H1 (cell line): ENCODE measurements at regions of chr14 and their contacts with region 1.

Region 1: DNA sequence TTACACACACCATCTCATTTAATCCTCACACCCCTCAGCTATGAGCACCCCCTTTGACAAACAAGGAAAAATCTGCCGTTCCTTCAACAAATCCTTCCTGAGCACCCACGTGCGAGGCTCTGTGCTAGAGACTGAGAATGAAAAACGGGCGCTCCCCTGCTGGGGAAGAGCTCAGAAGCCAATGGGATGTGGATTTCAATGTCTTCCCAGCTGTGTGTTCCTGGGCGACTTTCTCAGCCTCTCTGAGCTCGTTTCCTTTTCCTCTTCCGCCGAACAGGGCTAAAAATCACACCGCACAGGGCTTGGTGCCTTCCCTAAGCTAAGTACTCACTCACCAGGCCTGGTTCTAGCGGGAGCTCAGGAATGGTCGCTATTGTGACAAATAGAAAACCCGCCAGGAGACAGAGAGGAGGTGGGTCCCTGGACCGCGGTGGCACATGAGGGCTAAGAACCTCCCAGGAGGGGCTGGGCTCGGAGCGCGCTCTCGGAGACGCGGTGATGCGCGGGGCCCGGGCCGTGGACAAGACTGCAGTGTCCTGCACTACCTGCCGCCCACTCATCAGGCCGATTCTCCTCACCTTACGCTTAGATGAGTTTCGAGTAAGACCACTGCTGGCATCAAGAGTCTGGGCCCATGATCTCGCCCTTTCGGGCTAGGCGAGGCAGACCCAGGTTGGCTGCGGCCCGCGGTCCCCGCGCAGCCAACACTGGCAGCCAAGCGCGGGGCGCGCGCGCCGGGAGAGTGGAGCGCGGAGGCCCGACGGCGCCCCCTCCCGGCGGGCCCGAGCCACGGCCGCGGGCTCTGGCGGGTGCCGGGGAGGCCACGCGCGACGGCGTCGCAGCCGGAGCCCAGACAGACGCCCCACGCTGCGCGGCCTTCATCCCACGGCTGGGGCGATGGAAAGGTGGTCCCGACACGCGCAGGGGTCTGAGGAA is 17.0 kb downstream of the ZDHHC22 start:
- DNase-seq: peak in 1 of 2 experiments; percentile 81
- H3K4me3 ChIP-seq: peak overlapping the region; percentile 62 to 79 (median 68)
- H3K27ac ChIP-seq: no peak overlapping the region
- H3K4me1 ChIP-seq: peaks cover 20 to 36% (median 24%) of the 10 kb centered on the region in 4 experiments
- H3K27me3 ChIP-seq: peaks cover 0 to 2% (median 0%) of the 10 kb centered on the region in 4 experiments; a peak in 1 of 7 replicates
- CTCF ChIP-seq: peak; percentile 66 to 78 (median 68)
- EP300 ChIP-seq: no peak
- POLR2A ChIP-seq: peak in 1 of 2 experiments; percentile 30; a peak in 1 of 3 replicates
- RAD21 ChIP-seq: peak; percentile 33 to 65; a peak in 3 of 4 replicates

Region 2: DNA sequence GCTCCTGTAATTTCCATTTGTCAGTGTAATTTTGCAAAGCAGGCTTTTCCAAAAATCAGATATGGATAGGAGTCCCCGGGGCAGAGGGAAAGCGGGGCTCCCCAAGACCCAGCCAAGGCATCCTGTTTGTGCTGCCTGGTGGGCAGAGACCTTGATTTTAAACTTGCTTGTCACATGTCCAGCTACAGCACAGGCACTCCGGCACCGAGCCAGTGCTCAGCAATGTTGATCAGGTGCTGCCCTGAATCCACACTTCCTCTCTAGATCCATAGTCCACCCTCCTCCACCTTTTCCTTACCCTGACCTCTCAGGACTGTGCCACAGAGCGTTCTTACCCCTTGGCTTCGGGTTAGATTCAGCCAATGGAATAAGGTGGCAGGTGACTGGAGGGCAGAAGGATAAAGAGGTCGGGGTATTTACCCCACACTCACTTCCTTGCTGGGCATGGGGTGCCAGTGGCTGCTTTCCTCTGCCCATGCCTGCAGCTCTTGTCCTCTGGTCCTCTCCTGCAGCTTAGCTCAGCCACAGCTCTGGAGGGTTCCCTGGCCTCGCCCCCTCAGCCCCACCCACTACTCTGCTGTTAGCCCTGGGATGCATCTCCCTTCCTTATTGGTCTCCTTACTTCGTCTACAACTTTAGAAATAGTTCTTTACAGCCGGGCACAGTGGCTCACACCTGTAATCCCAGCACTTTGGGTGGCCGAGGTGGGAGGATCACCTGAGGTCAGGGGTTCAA is 176.2 kb before region 1 on chr14:
- CTCF ChIA-PET with region 1: no interaction called
- POLR2A ChIA-PET with region 1: no interaction called
- DNase-seq: no peak
- H3K4me3 ChIP-seq: peak overlapping the region in 1 of 4 experiments; percentile 45; a peak in 1 of 8 replicates
- H3K27ac ChIP-seq: peak overlapping the region; percentile 23; the same call in 1 of the 2 replicates
- H3K4me1 ChIP-seq: peaks cover 15 to 21% (median 19%) of the 10 kb centered on the region in 4 experiments
- H3K27me3 ChIP-seq: no peaks in the 10 kb centered on the region
- CTCF ChIP-seq: no peak
- EP300 ChIP-seq: no peak
- POLR2A ChIP-seq: no peak
- RAD21 ChIP-seq: no peak

Region 3: DNA sequence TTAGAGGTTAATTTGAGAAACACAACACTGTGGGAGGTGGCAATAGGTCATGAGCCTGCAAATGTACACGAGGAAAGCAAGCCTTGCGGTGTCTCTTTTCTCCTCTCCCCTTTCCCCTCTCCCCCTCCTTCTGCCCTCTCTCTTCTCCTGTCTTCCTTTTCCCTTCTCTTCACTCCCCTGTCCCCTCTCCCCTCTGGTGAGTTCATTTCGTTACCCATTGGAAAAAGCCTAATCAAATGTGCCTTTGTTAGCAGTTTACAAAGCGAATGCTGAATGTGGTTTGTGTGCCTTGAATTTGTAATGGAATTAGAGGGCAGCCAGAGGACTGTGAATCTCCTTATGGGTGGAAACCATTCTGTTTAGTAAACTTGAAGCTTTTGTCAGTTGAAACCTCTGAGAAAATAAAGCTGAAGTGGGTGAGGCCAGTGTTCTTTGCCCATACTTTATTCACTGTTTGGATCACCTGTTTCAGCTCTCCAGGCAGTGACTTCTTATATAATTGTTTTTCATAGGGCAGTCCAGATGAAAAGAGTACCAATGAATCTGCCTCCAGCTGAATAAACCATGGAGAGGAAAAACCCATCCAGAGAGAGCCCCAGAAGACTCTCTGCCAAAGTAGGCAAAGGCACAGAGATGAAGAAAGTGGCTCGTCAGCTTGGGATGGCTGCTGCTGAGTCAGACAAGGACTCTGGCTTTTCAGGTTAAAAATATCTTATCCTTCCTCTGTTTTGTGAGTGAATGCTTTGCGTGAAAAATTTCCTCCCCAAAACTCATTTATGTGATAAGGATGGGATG is 19.3 kb before region 1 on chr14:
- CTCF ChIA-PET with region 1: interaction called, 1,490 read pairs
- POLR2A ChIA-PET with region 1: interaction called, 69 read pairs
- DNase-seq: no peak
- H3K4me3 ChIP-seq: peak overlapping the region in 1 of 4 experiments; percentile 44; a peak in 2 of 8 replicates
- H3K27ac ChIP-seq: peak overlapping the region; percentile 58; the same call in 1 of the 2 replicates
- H3K4me1 ChIP-seq: peaks cover 2 to 25% (median 15%) of the 10 kb centered on the region in 4 experiments
- H3K27me3 ChIP-seq: no peaks in the 10 kb centered on the region
- CTCF ChIP-seq: no peak
- EP300 ChIP-seq: no peak
- POLR2A ChIP-seq: no peak
- RAD21 ChIP-seq: no peak

Region 4: DNA sequence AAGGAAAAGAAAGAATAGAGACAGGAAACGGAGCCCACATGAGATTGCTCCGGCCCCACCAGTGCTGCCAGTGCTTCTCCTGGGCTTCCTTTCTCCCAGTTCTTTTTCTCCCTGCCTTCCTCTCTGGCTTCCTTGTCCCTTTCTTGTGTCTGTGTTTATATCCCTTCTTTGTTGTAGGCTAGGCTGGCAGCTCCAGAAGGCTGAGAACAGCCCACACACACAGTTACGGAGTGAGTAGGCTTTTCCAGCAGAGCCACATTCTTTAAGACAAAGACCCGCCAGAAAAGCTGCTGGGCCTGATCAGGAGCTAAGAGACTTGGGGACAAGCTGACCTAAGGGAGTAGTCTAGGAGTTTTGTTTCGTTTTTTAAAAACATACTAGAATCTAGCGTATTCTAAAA is 13.6 kb before region 1 on chr14:
- CTCF ChIA-PET with region 1: interaction called, 1,490 read pairs
- POLR2A ChIA-PET with region 1: interaction called, 69 read pairs
- DNase-seq: peak in 1 of 2 experiments; percentile 59
- H3K4me3 ChIP-seq: peak overlapping the region in 1 of 4 experiments; percentile 39; a peak in 1 of 8 replicates
- H3K27ac ChIP-seq: peak overlapping the region; percentile 76
- H3K4me1 ChIP-seq: peaks cover 0 to 21% (median 14%) of the 10 kb centered on the region in 4 experiments; a peak in 6 of 7 replicates
- H3K27me3 ChIP-seq: no peaks in the 10 kb centered on the region
- CTCF ChIP-seq: no peak
- EP300 ChIP-seq: peak in 1 of 2 experiments; percentile 33; a peak in 1 of 3 replicates
- POLR2A ChIP-seq: peak in 1 of 2 experiments; percentile 73; a peak in 2 of 3 replicates
- RAD21 ChIP-seq: no peak

Region 5: DNA sequence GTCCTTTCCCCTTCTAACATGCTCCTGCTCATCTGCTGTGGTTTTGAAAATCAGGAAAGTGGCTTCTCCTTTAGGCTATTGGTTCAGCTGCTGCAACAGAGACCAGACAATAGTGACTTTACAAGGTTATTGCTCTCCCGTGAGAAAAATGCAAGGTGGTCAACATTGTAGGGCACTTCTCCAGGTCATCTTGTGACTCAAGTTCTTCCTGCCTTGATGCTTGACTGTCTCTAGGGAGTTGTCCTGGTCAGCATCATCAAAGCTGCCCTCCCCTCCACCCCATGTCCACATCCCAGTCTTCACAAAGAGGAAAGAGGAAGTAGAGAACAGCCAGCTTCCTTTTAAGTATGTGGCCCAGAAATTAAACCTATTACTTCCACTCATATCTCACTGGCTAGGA is 53.1 kb after region 1 on chr14:
- CTCF ChIA-PET with region 1: no interaction called
- POLR2A ChIA-PET with region 1: no interaction called
- DNase-seq: no peak
- H3K4me3 ChIP-seq: no peak overlapping the region
- H3K27ac ChIP-seq: no peak overlapping the region
- H3K4me1 ChIP-seq: peaks cover 3 to 11% (median 7%) of the 10 kb centered on the region in 4 experiments; a peak in 6 of 7 replicates
- H3K27me3 ChIP-seq: no peaks in the 10 kb centered on the region
- CTCF ChIP-seq: no peak
- EP300 ChIP-seq: no peak
- POLR2A ChIP-seq: no peak
- RAD21 ChIP-seq: no peak

Region 6: GRCh38 chr14:77364146-77364545 is 239.5 kb after region 1 on chr14:
- CTCF ChIA-PET with region 1: no interaction called
- POLR2A ChIA-PET with region 1: no interaction called
- DNase-seq: no peak
- H3K4me3 ChIP-seq: no peak overlapping the region
- H3K27ac ChIP-seq: no peak overlapping the region
- H3K4me1 ChIP-seq: no peaks in the 10 kb centered on the region
- H3K27me3 ChIP-seq: no peaks in the 10 kb centered on the region
- CTCF ChIP-seq: no peak
- EP300 ChIP-seq: no peak
- POLR2A ChIP-seq: no peak
- RAD21 ChIP-seq: no peak